ENCODE measurements at regions of chr2 and their contacts with region 1.

Region 1: GRCh38 chr2:168455648-168456520 is at the start of gene CERS6:
- DNase-seq: peak; percentile 64
- ATAC-seq: peak; percentile 93
- H3K4me3 ChIP-seq: peak within 1 kb of the TSS; percentile 79
- H3K27ac ChIP-seq: peak within 1 kb of the TSS; percentile 91
- H3K4me1 ChIP-seq: peaks cover 13% of the 10 kb centered on the region
- H3K27me3 ChIP-seq: no peaks in the 10 kb centered on the region
- CTCF ChIP-seq: no peak
- EP300 ChIP-seq: no peak
- POLR2A ChIP-seq: peak; percentile 95
- RAD21 ChIP-seq: no peak
- polyA plus RNA-seq, gene CERS6: 1.3 to 2.5 TPM

Region 2: GRCh38 chr2:168530982-168531622 is 75.2 kb after region 1 on chr2:
- CTCF ChIA-PET with region 1: no interaction called
- POLR2A ChIA-PET with region 1: no interaction called
- RAD21 ChIA-PET with region 1: no interaction called
- SMC1A ChIA-PET with region 1: no interaction called
- in situ Hi-C with region 1: no loop called
- intact Hi-C with region 1: loop called (anchors 5 kb)
- DNase-seq: no peak
- ATAC-seq: peak; percentile 69
- H3K4me3 ChIP-seq: peak overlapping the region; percentile 46; the same call in 1 of the 2 replicates
- H3K27ac ChIP-seq: peak overlapping the region; percentile 61
- H3K4me1 ChIP-seq: peaks cover 28% of the 10 kb centered on the region
- H3K27me3 ChIP-seq: no peaks in the 10 kb centered on the region
- CTCF ChIP-seq: no peak
- EP300 ChIP-seq: no peak
- POLR2A ChIP-seq: no peak
- RAD21 ChIP-seq: no peak

Region 3: DNA sequence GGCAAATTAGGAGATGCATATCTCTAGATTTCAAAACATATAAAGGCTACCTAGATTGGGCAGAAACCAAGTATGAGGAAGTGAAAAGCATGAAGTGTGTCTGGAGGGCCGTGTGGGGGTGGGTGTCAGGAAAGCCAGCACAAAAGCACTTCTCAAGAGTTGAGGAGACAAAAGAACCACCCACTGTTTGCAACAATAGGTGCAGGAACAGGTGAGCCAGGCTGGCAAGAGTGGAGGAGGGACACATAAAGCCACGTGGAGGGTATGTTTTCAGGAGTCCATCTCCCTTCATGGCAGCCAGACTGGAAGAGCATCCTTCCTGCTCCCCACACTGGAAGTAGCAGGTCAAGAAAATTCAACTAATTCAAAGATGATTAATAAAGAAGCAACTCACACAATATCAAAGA is 96.6 kb after region 1 on chr2:
- CTCF ChIA-PET with region 1: no interaction called
- POLR2A ChIA-PET with region 1: no interaction called
- RAD21 ChIA-PET with region 1: no interaction called
- SMC1A ChIA-PET with region 1: no interaction called
- in situ Hi-C with region 1: no loop called
- intact Hi-C with region 1: loop called (anchors 5 kb)
- DNase-seq: peak; percentile 63
- ATAC-seq: peak; percentile 100
- H3K4me3 ChIP-seq: no peak overlapping the region
- H3K27ac ChIP-seq: peak overlapping the region; percentile 56
- H3K4me1 ChIP-seq: peaks cover 9% of the 10 kb centered on the region; the same call in 1 of the 2 replicates
- H3K27me3 ChIP-seq: no peaks in the 10 kb centered on the region
- CTCF ChIP-seq: no peak
- EP300 ChIP-seq: peak; percentile 41 to 76; a peak in 3 of 4 replicates
- POLR2A ChIP-seq: no peak
- RAD21 ChIP-seq: no peak

Measured in GM12878 (cell line).